ENCODE measurements at regions of chr12 and their contacts with region 1.

Region 1: DNA sequence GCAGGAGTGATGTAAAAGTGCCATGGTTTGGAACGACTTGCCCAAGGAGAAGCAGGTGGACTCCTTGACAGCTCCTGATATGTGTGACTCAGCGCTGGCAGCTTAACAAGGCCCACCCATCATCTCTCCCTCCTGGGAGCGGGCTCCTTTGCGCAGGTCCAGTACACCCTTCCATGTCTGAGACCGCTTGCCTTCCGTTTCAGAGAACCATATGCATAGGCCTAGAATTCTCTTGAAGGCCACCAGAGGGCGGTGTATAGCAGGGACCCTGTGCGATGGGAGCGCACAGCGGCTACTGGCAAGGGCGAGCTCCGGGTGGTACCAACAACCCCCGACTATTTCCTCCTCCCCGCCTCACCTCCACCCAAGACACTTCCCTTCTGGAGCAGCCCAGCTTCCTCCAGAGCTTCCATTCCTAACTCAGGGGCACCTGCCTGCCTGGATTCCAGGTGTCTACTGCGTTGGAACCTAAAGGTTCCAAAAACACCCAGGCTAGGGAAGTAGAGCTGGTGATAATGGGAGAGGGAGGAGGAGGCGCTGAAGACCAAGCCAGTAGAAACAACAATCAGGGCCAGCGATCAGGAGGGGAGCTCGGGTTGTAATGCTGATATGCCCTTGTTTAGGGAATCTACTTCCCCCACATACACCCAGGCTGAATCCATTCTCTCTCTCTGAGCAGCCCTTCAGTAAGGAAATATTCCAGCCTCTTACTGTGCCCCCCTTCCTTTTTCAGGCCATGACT is 6.2 kb downstream of the DHH start:
- DNase-seq: peak; percentile 89 to 96
- ATAC-seq: peak; percentile 82 to 90
- H3K4me3 ChIP-seq: no peak overlapping the region
- H3K27ac ChIP-seq: peak overlapping the region in 1 of 2 experiments; percentile 64; a peak in 3 of 6 replicates
- H3K4me1 ChIP-seq: peaks cover 17% of the 10 kb centered on the region; the same call in 2 of the 3 replicates
- CTCF ChIP-seq: peak; percentile 92
- EP300 ChIP-seq: no peak
- POLR2A ChIP-seq: no peak
- RAD21 ChIP-seq: peak; percentile 69 to 74

Region 2: GRCh38 chr12:48995061-48995879 is 93.1 kb before region 1 on chr12:
- CTCF ChIA-PET with region 1: interaction called, 30 read pairs
- POLR2A ChIA-PET with region 1: no interaction called
- DNase-seq: peak; percentile 89 to 99
- ATAC-seq: peak; percentile 65 to 76
- H3K4me3 ChIP-seq: peak overlapping the region; percentile 32
- H3K27ac ChIP-seq: peak overlapping the region; percentile 32 to 56; a peak in 3 of 6 replicates
- H3K4me1 ChIP-seq: peaks cover 18% of the 10 kb centered on the region
- CTCF ChIP-seq: peak; percentile 66
- EP300 ChIP-seq: no peak
- POLR2A ChIP-seq: no peak
- RAD21 ChIP-seq: peak; percentile 81 to 83

Region 3: GRCh38 chr12:49055981-49056754 is 32.2 kb before region 1 on chr12:
- CTCF ChIA-PET with region 1: interaction called, 166 read pairs
- POLR2A ChIA-PET with region 1: no interaction called
- DNase-seq: peak; percentile 75 to 83
- ATAC-seq: peak; percentile 57 to 79; a peak in 5 of 6 replicates
- H3K4me3 ChIP-seq: no peak overlapping the region
- H3K27ac ChIP-seq: no peak overlapping the region
- H3K4me1 ChIP-seq: peaks cover 29% of the 10 kb centered on the region
- CTCF ChIP-seq: no peak
- EP300 ChIP-seq: no peak
- POLR2A ChIP-seq: no peak
- RAD21 ChIP-seq: no peak

Region 4: GRCh38 chr12:49121047-49121696 is 32.8 kb after region 1 on chr12:
- CTCF ChIA-PET with region 1: interaction called, 161 read pairs
- POLR2A ChIA-PET with region 1: interaction called, 6 read pairs
- DNase-seq: peak; percentile 86 to 91
- ATAC-seq: peak; percentile 84 to 94
- H3K4me3 ChIP-seq: no peak overlapping the region
- H3K27ac ChIP-seq: peak overlapping the region in 1 of 2 experiments; percentile 42; a peak in 2 of 6 replicates
- H3K4me1 ChIP-seq: no peaks in the 10 kb centered on the region
- CTCF ChIP-seq: peak; percentile 75
- EP300 ChIP-seq: no peak
- POLR2A ChIP-seq: no peak
- RAD21 ChIP-seq: peak; percentile 77 to 87

Region 5: DNA sequence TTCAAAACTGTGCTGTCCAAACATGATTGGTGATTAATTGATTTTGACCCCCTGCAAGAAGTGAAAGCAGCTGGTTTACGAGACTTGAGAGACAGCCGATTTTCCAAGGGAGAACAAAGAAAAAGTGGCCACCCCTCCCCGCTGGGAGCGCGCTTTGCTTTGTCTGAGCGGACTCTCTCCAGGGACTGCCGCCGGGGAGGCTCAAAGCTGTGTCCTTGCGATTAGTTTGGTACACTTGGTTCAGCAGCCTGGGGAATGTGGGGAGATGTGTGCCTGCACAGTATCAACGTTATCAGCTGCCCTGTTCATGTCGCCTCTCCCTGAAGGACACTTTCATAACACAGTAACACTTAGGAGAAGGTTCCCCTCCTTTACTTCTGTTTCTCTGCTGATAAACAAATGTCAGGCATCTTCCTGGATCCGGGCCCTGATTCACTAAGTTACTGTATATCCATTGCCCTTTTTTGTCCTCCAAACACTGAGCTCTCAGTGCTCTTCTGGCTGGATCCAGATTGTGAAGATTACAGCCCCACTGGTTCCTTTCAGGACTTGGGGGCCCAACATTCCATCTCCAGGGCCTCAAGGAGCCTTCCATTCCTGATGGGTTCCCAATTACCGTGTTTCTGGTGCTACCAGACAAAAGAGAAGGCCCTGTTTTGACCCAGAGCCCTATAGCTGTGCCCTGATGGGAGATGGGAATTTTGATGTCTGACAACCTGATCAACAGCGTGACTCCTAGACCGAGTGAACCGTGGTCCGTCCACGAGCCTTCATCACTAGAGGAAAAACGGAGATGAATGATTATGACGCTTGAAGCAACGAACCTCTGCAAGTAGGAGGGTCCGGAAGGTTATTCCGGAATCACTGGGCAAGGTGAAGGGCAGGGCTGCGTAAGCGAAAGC is 144.8 kb after region 1 on chr12:
- CTCF ChIA-PET with region 1: interaction called, 15 read pairs
- POLR2A ChIA-PET with region 1: interaction called, 6 read pairs
- DNase-seq: no peak
- ATAC-seq: no peak
- H3K4me3 ChIP-seq: no peak overlapping the region
- H3K27ac ChIP-seq: peak overlapping the region in 1 of 2 experiments; percentile 92; a peak in 1 of 6 replicates
- H3K4me1 ChIP-seq: peaks cover 3% of the 10 kb centered on the region; the same call in 1 of the 3 replicates
- CTCF ChIP-seq: no peak
- EP300 ChIP-seq: no peak
- POLR2A ChIP-seq: no peak
- RAD21 ChIP-seq: no peak